ENCODE measurements at regions of chr2 and their contacts with region 1.

Region 1: DNA sequence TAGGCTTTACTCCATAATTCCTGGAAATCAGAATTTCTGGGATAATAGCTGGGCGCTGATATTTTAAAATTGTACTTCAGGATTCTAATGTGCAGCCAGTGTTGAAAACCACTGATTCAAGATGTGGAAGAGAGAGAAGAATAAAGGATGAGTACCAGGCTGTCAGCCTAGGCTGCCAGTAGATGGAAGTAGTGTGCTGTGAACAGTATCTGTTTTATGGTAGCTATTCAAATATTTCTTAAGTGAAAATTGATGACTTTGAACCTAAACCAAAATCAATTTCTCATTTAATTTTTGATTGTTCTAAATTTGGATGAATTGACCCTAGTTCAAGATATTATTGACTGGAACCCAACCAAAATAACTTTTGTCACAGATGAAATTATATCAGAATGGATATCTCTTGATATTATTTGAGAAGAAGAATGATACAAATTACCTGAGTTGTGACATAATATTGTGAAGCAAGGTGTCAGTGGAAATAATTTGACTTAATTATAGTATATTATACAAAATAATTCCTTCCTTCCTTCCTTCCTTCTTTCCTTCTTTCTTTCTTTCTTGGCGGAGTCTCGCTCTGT is 88.1 kb downstream of the COMMD1 start:
- DNase-seq: no peak
- H3K4me3 Mint-ChIP-seq: no peak overlapping the region
- H3K27ac Mint-ChIP-seq: no peak overlapping the region
- H3K4me1 Mint-ChIP-seq: no peaks in the 10 kb centered on the region
- H3K27me3 Mint-ChIP-seq: no peaks in the 10 kb centered on the region

Region 2: GRCh38 chr2:61978522-61978921 is 15.0 kb before region 1 on chr2:
- CTCF ChIA-PET with region 1: no interaction called
- POLR2A ChIA-PET with region 1: no interaction called
- DNase-seq: no peak
- H3K4me3 Mint-ChIP-seq: no peak overlapping the region
- H3K27ac Mint-ChIP-seq: no peak overlapping the region
- H3K4me1 Mint-ChIP-seq: no peaks in the 10 kb centered on the region
- H3K27me3 Mint-ChIP-seq: no peaks in the 10 kb centered on the region

Region 3: DNA sequence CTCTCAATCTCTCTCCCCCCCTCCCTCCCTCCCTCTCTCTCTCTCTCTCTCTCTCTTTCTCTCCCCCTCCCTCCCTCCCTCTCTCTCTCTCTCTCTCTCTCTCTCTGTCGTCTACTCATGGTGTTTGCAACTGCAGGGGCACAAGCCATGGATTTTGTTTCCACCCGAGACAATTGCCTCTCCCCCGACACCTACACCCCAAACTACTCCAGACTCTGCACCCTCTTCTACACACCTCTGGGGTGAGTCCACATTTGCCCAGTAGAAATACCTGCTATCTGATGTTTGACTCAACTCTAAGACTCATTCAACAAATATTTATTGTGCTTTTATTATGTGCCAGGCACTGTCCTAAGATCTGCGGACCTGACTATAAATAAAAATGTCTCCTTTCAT is 418.8 kb after region 1 on chr2:
- CTCF ChIA-PET with region 1: interaction called, 12 read pairs
- POLR2A ChIA-PET with region 1: no interaction called
- DNase-seq: no peak
- H3K4me3 Mint-ChIP-seq: no peak overlapping the region
- H3K27ac Mint-ChIP-seq: no peak overlapping the region
- H3K4me1 Mint-ChIP-seq: peaks cover 14% of the 10 kb centered on the region
- H3K27me3 Mint-ChIP-seq: no peaks in the 10 kb centered on the region